Ascending aorta (tissue), 2 donors: ENCODE measurements at regions of chr17 and their contacts with region 1.

Region 1: GRCh38 chr17:31787857-31788570 is 71.0 kb downstream of the COPRS start:
- DNase-seq: peak; percentile 51 to 89
- H3K4me3 ChIP-seq: no peak overlapping the region
- H3K27ac ChIP-seq: peak overlapping the region; percentile 55 to 85
- H3K4me1 ChIP-seq: peaks cover 0 to 7% of the 10 kb centered on the region in 2 donors
- H3K27me3 ChIP-seq: no peaks in the 10 kb centered on the region
- CTCF ChIP-seq: no peak

Region 2: DNA sequence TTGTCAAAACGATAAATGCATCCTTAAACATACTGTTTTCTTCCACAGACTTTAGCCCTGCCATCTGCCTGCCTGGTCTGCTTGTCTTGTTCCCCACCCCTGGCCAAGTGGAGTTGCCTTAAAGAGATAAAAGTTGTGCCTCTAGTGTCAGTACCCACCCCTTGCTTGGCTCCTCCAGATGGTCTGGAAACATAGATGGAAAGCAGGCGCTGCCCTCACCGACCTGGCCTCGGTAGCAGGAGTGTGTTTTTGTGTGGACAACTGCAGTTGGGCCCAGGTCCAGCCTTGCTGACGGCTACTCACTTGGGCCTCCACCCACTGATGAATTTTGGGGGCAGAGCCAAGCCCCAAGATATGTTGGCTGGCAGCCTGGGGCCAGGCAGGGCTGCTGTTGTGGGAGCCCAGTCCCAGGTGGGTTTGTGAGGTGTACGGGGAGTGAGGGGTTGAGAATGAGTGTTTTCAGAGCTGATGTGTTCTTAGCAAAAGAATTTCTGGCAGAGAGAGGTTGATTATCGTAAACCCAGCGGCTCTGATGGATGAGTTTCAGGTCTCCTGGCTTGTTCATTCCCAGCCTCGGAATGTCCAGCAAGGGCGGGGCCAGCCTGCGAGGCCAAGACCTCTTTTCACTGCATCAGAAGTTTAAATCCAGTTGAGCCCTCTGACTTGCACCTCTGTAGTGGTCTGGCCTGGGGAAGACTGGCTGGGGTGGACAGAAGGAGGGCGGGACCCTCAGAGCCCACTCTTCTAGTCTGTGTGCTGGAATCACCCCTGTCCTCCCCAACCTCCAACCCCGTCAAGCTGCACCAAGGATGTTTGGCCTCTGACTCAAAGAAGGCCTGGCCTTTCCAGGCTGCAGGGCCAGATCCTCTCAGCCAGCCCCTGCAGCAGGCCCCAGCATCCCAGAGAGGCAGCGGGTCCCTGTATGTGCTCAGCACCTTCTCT is 216.8 kb before region 1 on chr17:
- intact Hi-C with region 1: loop called (anchors 5 kb)
- DNase-seq: peak in 1 of 2 donors; percentile 92
- H3K4me3 ChIP-seq: no peak overlapping the region
- H3K27ac ChIP-seq: peak overlapping the region; percentile 83 to 91
- H3K4me1 ChIP-seq: peaks cover 16 to 63% of the 10 kb centered on the region in 2 donors
- H3K27me3 ChIP-seq: no peaks in the 10 kb centered on the region
- CTCF ChIP-seq: no peak

Region 3: GRCh38 chr17:31811101-31811500 is 23.1 kb after region 1 on chr17:
- intact Hi-C with region 1: loop called (anchors 1 kb)
- DNase-seq: no peak
- H3K4me3 ChIP-seq: peak overlapping the region in 1 of 2 donors; percentile 46
- H3K27ac ChIP-seq: peak overlapping the region; percentile 64 to 70
- H3K4me1 ChIP-seq: peaks cover 4 to 9% of the 10 kb centered on the region in 2 donors
- H3K27me3 ChIP-seq: no peaks in the 10 kb centered on the region
- CTCF ChIP-seq: no peak

Region 4: GRCh38 chr17:31967648-31968047 is 179.6 kb after region 1 on chr17:
- intact Hi-C with region 1: no loop called
- DNase-seq: no peak
- H3K4me3 ChIP-seq: no peak overlapping the region
- H3K27ac ChIP-seq: no peak overlapping the region
- H3K4me1 ChIP-seq: no peaks in the 10 kb centered on the region
- H3K27me3 ChIP-seq: no peaks in the 10 kb centered on the region
- CTCF ChIP-seq: no peak